Posterior vena cava (tissue), 2 donors: ENCODE measurements at regions of chr2 and their contacts with region 1.

Region 1: GRCh38 chr2:103552772-103553171 is 790.9 kb downstream of the TMEM182 start:
- DNase-seq: no peak

Region 2: GRCh38 chr2:101806123-101806522 is 1746.6 kb before region 1 on chr2:
- intact Hi-C with region 1: no loop called
- DNase-seq: no peak

Region 3: GRCh38 chr2:103183061-103183460 is 369.7 kb before region 1 on chr2:
- intact Hi-C with region 1: no loop called
- DNase-seq: no peak

Region 4: DNA sequence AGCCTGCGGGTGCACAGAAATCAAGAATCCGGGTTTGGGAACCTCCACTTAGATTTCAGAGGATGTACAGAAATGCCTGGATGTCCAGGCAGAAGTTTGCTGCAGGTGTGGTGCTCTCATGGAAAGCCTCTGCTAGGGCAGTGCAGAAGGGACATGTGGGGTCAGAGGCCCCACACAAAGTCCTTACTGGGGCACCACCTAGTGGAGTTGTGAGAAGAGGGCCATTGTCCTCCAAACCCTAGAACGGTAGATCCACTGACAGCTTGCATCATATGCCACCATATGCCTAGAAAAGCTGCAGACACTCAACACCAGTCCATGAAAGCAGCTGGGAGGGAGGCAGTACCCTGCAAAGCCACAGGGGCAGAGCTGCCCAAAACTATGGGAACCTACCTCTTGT is 42.1 kb after region 1 on chr2:
- intact Hi-C with region 1: no loop called
- DNase-seq: no peak

Region 5: GRCh38 chr2:105102963-105103421 is 1550.2 kb after region 1 on chr2:
- intact Hi-C with region 1: loop called in 1 of 2 experiments (anchors 10 kb)
- DNase-seq: no peak